Kidney (tissue), 22 donors: ENCODE measurements at regions of chr20 and their contacts with region 1.

Region 1: DNA sequence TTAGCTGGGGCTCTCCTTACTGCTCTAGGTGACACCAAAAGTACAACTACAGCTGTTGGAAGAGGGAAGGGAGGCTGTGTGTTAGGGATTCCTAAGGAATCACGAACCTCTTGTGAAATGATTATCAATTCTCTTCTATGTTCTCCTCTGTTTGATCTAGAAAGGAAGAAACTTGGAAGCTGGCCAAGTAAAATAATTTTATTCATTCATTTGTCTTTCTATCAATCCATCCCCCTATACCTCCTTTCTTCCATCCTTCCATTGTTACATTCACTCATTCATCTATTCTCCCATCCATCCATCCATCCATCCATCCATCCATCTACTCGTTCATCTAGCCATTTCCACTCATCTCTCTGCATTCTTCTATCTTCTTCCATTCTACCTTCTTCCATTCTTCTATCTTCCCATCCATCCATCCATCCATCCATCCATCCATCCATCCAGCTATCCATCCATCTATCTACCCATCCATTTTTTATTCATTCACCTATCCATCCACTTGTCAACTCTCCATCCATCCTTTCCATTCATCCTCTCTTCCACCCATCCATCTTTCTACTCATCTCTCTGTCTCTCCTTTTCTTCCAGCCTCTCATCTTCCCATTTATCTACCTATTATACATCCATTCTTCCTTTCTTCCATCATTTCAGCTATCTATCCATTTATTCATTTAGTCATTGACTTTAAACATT is 52.8 kb upstream of the ZNFX1 start:
- DNase-seq: no peak
- H3K4me3 ChIP-seq: no peak overlapping the region
- H3K27ac ChIP-seq: no peak overlapping the region
- H3K4me1 ChIP-seq: no peaks in the 10 kb centered on the region
- H3K27me3 ChIP-seq: no peaks in the 10 kb centered on the region
- CTCF ChIP-seq: no peak

Region 2: DNA sequence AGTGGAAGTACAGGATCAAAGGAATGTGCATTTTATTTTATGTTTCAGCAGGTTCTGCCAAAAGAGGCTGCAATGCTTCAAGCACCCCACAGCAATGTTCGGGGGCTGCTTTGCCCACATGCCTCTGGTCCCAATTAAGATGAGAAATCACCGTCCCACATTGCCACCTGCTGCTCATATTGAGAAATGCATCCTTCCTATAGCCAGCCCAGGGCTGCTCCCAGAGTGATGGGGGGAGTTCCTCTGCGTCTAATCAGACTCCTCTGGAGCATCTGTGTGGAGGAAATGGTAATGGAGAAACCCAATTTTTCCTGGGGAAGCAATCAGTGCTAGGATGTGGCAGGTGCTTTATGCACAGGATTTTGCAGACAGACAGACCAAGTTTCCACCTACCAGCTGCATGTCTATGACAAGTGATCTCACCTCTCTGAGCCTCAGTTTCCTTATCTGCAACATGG is 203.6 kb after region 1 on chr20:
- intact Hi-C with region 1: loop called (anchors 5 kb)
- DNase-seq: peak in 4 of 5 donors; percentile 58 to 78 (median 72)
- H3K4me3 ChIP-seq: no peak overlapping the region
- H3K27ac ChIP-seq: no peak overlapping the region
- H3K4me1 ChIP-seq: no peaks in the 10 kb centered on the region
- H3K27me3 ChIP-seq: no peaks in the 10 kb centered on the region
- CTCF ChIP-seq: peak; percentile 58